ENCODE measurements at regions of chr11 and their contacts with region 1.

Region 1: DNA sequence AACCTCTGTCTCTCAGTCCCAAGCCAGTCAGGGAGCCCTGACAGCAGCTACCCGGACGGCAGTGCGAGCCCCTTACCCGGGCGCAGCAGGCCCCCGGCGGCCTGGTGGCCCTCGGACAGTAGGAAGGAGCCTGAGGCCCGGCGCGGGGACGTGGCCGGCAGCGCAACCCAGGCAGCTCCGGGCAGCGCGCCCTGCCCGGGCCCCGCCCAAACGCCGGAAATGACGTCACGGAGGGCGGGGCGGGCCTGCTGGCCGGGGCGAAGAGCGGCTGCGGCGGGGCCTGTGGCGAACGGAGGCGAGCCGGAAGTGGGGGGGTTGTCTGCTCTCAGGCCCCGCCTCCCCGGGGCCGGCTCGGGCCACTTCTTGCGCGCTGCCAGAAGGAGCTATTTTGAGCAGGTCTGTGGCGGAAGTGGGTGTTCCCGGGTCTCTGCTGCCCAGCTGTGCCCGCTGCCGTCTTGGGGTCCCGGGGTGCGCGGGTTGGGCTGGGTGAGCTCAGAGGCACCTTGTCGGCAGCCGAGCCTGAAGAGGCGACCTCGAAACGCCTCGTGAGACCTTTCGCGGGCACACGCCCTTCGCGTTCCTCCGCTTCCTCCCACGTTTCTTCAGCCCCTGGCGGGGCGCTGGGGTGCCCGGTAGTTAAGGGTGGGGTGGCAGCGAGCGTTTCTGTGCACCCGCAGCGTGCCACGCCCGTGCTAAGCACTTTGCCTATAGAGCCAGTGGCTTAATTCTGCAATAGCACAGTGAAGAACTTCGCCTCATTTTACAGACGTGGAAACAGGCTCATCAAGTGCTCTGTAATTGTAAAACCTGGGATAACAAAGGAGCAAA is at the start of gene C11orf24:
- DNase-seq: peak; percentile 98
- H3K4me3 ChIP-seq: peak within 1 kb of the TSS; percentile 86
- H3K27ac ChIP-seq: peak within 1 kb of the TSS; percentile 91
- H3K4me1 ChIP-seq: no peaks in the 10 kb centered on the region
- H3K27me3 ChIP-seq: no peaks in the 10 kb centered on the region
- CTCF ChIP-seq: no peak
- total RNA-seq, gene C11orf24: 48.1 and 52.3 TPM in 2 replicates

Region 2: DNA sequence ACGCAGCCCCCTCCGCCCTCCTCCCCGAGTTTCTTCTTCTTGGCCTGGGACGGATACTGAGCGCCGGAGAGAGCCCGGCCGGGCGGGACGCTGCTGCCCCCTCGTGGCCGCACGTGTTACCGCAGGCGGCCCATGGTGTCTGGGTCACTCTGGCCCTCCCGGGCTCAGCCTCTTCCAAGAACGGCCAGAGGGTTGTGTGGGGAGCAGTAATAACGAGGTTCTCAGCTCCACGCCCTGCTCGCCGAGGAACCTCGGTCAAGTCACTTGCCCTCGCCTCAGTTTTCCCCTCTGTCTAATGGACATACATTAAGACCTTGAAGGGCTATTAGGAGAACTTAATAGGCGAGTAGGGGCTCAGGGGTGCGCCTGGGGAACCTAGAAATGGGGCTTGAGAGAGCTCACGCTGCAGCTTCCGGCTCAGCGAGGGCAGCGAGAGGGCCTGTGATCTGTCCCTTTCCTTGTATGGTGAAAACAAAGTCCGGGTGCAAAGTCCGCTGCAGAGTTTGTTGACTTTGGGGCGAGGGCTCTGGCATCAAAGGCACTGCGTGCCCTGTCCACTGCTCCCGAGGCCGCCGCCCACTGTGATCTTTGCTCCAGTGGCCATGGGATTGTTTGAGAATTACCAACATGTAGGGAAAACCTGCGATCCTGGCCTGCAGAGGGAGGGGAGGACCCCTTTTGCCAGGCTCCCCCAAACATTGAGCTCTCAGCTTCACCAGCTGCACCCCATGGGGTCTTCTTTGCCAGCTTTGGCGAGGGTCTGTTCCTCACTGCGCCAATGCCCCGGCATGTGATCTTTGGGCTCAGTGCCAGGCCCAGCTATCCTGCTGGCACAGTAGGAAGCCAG is 26.0 kb after region 1 on chr11:
- CTCF ChIA-PET with region 1: interaction called, 6 read pairs
- POLR2A ChIA-PET with region 1: no interaction called
- intact Hi-C with region 1: loop called (anchors 2 kb)
- DNase-seq: peak; percentile 83
- H3K4me3 ChIP-seq: no peak overlapping the region
- H3K27ac ChIP-seq: no peak overlapping the region
- H3K4me1 ChIP-seq: no peaks in the 10 kb centered on the region
- H3K27me3 ChIP-seq: no peaks in the 10 kb centered on the region
- CTCF ChIP-seq: peak; percentile 100

Region 3: DNA sequence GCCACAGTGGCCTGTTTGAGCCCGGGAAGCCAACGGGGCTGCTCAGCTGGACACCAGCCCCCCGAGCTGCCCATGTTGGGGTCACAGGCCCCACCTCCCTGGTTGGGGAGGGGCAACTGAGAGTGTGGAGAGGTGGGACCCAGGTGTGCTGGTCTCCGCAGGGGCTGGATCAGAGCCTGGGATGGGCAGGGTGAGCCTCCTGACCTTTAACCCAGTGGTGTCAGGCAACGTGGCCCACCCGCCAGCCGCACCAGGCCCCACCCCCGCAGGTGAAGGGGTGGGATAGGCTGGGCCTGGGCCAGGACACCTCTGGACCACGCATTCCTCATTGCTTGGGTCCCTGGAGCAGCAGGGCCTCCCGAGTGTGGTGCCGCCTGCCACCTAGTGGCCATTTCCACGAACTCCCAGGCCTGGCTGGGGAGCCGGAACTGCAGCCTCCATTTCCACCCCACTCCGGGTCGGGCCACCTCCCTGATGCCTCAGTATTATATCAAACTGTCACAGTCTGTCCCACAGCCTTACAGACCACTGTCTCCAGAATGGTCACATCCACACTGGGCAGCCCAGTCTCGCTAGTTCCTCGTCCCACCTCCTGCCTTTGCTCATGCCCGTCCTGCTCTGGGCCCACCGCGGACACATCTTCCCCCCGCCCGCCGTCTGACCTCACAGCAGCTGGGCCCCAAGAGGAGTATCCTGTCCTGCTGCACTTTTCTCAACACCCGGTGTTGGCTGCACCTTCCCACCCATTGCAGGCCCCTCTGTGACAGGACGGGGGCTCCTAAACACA is 175.2 kb after region 1 on chr11:
- CTCF ChIA-PET with region 1: no interaction called
- POLR2A ChIA-PET with region 1: no interaction called
- intact Hi-C with region 1: loop called (anchors 5 kb)
- DNase-seq: peak; percentile 87
- H3K4me3 ChIP-seq: no peak overlapping the region
- H3K27ac ChIP-seq: no peak overlapping the region
- H3K4me1 ChIP-seq: peaks cover 10% of the 10 kb centered on the region
- H3K27me3 ChIP-seq: no peaks in the 10 kb centered on the region
- CTCF ChIP-seq: peak; percentile 97

Region 4: DNA sequence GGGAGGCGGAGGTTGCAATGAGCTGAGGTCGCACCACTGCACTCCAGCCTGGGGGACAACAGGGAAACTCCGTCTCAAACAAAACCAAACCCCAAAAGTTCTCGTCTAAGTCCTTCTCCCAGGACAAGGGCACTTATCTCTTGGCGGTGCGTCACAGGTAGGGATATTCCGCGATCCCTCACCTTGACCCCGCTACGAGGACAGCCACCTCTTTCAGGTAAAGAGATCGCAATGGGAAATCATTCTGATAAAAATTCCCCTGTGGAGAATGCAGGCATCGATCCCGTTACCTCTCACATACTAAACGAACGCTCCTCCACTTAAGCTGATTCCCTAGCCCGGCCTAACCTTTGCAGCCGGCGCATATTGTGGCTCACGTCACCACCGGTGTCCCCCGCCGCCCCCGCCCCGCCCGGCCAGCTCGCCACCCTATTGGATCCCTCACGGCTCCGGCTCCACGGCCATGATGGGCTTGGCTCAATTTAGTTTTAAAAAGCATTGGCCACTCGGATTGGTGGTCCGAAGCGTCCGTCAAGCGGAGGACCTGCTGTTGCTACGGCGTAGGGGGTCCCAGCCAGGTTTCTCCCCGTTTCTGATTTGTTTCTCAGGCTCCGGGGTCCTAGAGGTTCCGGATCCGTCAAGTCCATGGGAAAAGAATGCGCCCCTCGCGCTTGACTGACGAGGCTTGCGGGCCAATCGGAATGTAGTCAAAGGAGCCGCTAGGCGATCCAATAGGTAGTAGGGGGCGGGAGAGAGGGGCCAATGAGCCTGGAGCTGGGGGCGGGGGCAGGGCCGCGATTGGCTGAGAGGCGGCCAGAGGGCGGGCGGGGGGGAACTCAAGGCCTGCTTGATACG is 188.1 kb after region 1 on chr11:
- CTCF ChIA-PET with region 1: no interaction called
- POLR2A ChIA-PET with region 1: no interaction called
- intact Hi-C with region 1: loop called (anchors 5 kb)
- DNase-seq: peak; percentile 100
- H3K4me3 ChIP-seq: peak overlapping the region; percentile 92
- H3K27ac ChIP-seq: peak overlapping the region; percentile 90
- H3K4me1 ChIP-seq: peaks cover 23% of the 10 kb centered on the region
- H3K27me3 ChIP-seq: no peaks in the 10 kb centered on the region
- CTCF ChIP-seq: no peak

Measured in A673 (cell line).